MCF 10A (cell line): ENCODE measurements at regions of chr5 and their contacts with region 1.

Region 1: DNA sequence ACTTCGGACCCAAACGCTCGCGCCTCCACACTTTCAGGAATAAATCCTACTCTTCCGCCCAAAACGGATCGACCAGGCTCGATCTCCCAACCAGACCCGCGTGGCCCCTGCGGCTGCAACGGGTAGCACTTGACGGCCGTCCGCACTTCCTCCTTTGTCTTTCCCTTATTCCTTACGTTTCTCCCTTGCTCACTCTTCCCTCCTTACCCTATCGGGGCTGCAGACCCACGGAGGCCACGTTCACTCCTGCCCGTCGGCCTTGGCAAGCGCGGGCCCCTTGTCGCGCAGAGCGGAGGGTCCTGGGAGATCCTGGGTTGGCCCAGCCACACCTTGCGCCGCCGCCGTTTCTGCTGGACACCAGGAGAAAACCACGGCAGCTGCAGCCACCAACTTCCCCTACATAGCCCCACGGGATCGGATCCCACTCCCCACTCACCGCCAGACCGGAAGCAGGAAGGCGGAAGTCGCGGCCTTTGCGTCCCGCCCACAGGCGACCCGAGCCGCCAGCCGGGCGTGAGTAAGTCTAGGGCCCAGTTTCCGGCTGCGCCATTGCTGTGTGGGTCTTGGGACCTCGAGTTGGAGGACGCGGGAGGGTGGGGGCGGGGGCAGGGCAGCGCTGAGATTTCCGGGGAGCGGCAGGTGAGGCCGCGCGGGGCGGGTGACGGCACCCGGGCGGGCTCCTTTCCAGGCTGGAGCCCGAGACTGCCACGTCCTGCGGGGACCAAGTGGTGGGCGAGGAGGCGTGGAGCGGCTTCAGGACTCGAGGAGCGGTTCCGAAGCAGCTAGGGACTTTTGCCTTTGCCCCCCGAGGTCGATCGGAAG is at the start of gene SMIM15:
- DNase-seq: peak; percentile 90
- H3K4me3 Mint-ChIP-seq: peak within 1 kb of the TSS; percentile 93
- H3K27ac Mint-ChIP-seq: peak within 1 kb of the TSS; percentile 97
- H3K4me1 Mint-ChIP-seq: peaks cover 8% of the 10 kb centered on the region
- H3K27me3 Mint-ChIP-seq: no peaks in the 10 kb centered on the region
- CTCF ChIP-seq: no peak
- total RNA-seq, gene SMIM15: 92.5 and 95.8 TPM in 2 replicates

Region 2: DNA sequence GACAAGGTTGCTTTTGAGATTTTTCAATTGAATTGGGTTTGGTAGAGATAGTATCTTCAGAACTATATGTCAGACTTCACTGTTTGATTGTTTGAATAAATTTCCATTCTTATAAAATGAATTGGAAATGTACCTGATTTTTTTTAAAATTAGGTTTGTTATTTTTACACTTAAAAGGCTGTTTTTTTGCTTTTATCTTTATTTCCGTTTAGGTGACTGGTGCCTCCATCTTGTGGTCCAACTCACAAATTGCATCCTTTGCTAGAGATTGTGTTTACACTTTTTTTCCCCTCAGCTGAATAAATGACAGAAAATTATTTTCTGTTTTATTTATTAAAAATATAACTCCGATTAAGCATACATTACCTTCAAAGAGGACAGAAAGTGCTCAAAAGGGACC is 201.6 kb before region 1 on chr5:
- CTCF ChIA-PET with region 1: no interaction called
- POLR2A ChIA-PET with region 1: interaction called, 5 read pairs
- intact Hi-C with region 1: loop called (anchors 5 kb)
- DNase-seq: peak; percentile 26
- H3K4me3 Mint-ChIP-seq: no peak overlapping the region
- H3K27ac Mint-ChIP-seq: no peak overlapping the region
- H3K4me1 Mint-ChIP-seq: no peaks in the 10 kb centered on the region
- H3K27me3 Mint-ChIP-seq: no peaks in the 10 kb centered on the region
- CTCF ChIP-seq: peak; percentile 48

Region 3: DNA sequence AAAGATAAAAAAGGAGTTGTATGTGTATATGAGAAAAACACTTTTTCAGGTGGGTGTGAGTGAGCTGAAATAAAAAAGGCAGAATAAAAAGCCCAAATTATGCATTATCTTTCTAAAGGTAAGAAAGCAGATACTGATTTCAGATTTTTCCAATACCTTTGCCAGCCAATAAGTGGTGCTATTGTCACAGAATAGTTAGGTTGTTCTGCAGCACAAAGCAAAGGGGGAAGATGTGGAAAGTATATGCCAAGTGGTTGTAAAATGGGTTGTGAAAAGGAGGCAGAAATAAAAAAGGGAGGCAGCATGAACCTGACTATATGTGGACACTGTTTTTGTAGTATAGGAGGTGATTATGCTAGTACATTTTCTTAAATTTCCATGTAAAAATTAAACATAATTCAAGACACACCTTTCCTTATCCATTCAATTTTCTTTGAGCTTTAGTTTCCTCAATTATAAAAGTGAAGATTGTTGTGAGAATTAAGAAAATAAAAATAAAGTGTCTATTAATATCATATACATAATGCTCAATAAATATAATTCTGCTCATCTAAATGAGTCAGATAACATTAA is 106.7 kb before region 1 on chr5:
- CTCF ChIA-PET with region 1: interaction called, 5 read pairs
- POLR2A ChIA-PET with region 1: interaction called, 5 read pairs
- intact Hi-C with region 1: loop called (anchors 2 kb)
- DNase-seq: peak; percentile 51
- H3K4me3 Mint-ChIP-seq: no peak overlapping the region
- H3K27ac Mint-ChIP-seq: no peak overlapping the region
- H3K4me1 Mint-ChIP-seq: peaks cover 33% of the 10 kb centered on the region
- H3K27me3 Mint-ChIP-seq: no peaks in the 10 kb centered on the region
- CTCF ChIP-seq: peak; percentile 60

Region 4: DNA sequence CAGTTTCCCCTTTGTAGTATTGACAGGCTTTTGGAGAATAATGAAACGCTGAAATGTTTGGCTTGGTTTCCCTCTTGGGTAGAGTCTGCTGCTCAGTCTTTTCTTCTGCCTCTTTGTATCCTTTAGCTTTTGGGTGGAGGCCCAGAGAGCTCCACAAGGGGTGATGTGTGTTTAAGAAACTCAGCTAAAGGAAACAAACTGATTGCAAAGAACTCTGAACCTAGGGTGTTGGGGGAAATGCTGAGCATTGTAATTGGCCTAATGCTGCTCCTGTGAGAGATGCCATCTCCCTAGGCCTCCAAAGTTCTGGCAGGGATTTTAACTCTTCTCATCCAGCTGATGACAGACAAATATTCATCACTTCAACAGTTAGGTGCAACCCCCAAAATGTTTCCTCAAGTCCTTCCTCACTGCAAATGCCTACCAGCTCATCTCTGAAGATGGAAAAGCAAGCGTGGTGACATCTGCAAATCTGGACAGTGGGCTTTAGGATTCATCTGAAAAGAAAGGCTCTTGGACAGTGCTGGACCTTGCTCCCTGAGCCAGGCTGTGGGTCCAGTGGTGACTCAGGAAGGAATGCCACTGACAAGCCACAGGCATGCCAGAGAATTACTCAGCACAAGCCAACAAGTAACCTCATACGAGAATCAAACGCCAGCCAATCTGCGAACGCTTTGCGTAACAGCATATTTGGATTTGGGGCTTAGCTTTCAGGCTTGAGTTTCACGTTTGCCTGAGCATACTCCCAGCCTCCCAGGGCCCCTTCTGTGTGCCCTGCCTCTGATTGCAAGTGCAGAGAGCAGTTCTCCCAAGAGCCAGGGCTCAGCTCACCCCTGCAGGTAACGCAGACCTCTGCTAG is 139.3 kb after region 1 on chr5:
- CTCF ChIA-PET with region 1: interaction called, 5 read pairs
- POLR2A ChIA-PET with region 1: interaction called, 10 read pairs
- intact Hi-C with region 1: loop called (anchors 2 kb)
- DNase-seq: peak; percentile 98
- H3K4me3 Mint-ChIP-seq: peak overlapping the region; percentile 10
- H3K27ac Mint-ChIP-seq: no peak overlapping the region
- H3K4me1 Mint-ChIP-seq: peaks cover 48% of the 10 kb centered on the region
- H3K27me3 Mint-ChIP-seq: no peaks in the 10 kb centered on the region
- CTCF ChIP-seq: no peak

Region 5: DNA sequence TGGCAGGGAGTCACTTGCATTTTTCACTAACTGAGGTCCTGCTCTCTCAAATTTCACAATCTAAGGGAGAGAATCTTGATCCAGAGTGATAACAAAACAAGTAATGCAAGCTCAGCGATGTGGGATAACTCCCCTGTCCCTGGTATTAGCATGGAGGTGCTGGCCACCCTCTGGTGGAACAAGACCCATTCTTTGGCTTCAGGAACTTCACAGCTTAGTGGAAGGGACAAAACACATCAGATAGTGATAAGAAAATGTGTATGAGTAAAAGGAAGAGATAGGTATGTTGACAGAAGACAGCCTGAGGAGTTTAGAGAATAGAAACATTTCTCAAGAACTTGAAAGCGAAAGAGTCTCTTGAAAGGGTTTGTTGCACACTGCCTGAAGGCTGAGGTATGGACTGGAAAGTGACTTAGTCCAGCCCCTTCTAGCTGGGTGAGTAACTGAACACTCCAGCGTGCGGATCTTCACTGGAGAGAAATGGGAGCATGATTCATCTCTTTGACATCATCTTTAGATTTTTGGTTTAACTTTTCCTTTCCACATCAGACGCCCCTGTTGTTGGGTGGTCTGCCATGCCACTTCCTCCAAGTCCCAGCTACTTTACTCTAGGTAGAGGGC is 144.4 kb after region 1 on chr5:
- CTCF ChIA-PET with region 1: interaction called, 5 read pairs
- POLR2A ChIA-PET with region 1: interaction called, 10 read pairs
- intact Hi-C with region 1: loop called (anchors 2 kb)
- DNase-seq: peak; percentile 55
- H3K4me3 Mint-ChIP-seq: no peak overlapping the region
- H3K27ac Mint-ChIP-seq: peak overlapping the region; percentile 66
- H3K4me1 Mint-ChIP-seq: peaks cover 30% of the 10 kb centered on the region
- H3K27me3 Mint-ChIP-seq: no peaks in the 10 kb centered on the region
- CTCF ChIP-seq: no peak

Region 6: DNA sequence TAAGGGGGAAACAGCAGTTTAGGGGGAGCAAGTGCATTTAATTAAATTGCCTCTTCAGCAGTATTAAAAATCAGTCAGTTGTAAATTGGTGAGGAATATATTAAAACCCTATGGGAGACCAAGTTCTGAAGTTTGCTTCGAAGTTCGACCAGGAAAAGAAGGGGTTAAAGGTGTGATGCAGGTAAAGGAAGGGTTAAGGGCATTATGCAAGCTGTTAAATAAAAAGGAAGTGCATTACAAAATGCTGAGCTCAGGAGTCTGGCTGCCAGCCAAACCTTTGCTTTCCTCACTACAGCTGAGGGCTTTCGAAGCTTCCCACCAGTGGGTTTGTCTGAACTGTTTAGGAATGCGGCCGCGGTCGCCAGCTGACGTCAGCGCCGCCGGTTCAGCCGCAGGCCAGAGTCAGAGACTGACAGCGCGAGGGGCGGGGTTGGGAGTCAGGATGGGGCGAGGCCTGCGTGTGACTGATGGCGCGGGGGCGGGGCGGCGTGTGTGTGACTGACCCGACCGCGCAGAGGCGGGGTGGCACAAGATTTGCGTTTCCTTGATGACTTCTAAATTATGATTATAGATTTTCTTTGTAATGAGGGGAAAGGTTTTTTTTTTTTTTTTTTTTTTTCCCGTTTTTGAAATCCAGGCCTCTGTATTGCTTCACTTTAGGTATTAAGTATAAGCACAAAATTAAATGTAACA is 246.4 kb after region 1 on chr5:
- CTCF ChIA-PET with region 1: interaction called, 3 read pairs
- POLR2A ChIA-PET with region 1: interaction called, 3 read pairs
- intact Hi-C with region 1: loop called (anchors 5 kb)
- DNase-seq: peak; percentile 99
- H3K4me3 Mint-ChIP-seq: peak overlapping the region; percentile 71
- H3K27ac Mint-ChIP-seq: peak overlapping the region; percentile 94
- H3K4me1 Mint-ChIP-seq: peaks cover 29% of the 10 kb centered on the region
- H3K27me3 Mint-ChIP-seq: no peaks in the 10 kb centered on the region
- CTCF ChIP-seq: no peak